Cardiac septum (tissue), 1 donor: ENCODE measurements at regions of chr15 and their contacts with region 1.

Region 1: GRCh38 chr15:49901996-49902684 is 216.9 kb downstream of the ATP8B4 start:
- DNase-seq: no peak

Region 2: DNA sequence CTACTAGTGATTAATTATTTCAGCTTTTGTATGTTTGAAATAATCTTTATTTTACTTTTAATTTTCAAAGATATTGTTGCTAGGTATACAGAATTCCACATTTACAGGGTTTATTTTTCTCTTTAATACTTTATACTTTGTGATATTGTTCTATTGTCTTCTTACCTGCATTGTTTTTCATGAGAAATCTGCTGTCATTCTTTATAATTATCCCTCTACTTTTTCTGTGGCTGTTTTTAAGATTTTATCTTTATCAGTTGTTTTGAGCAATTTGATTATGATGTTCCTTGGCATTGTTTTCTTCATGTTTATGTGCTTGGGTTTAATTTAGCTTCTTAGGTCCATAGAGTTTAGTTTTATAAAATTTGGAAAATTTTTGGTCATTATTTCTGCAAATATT is 112.7 kb before region 1 on chr15:
- intact Hi-C with region 1: no loop called
- DNase-seq: no peak

Region 3: DNA sequence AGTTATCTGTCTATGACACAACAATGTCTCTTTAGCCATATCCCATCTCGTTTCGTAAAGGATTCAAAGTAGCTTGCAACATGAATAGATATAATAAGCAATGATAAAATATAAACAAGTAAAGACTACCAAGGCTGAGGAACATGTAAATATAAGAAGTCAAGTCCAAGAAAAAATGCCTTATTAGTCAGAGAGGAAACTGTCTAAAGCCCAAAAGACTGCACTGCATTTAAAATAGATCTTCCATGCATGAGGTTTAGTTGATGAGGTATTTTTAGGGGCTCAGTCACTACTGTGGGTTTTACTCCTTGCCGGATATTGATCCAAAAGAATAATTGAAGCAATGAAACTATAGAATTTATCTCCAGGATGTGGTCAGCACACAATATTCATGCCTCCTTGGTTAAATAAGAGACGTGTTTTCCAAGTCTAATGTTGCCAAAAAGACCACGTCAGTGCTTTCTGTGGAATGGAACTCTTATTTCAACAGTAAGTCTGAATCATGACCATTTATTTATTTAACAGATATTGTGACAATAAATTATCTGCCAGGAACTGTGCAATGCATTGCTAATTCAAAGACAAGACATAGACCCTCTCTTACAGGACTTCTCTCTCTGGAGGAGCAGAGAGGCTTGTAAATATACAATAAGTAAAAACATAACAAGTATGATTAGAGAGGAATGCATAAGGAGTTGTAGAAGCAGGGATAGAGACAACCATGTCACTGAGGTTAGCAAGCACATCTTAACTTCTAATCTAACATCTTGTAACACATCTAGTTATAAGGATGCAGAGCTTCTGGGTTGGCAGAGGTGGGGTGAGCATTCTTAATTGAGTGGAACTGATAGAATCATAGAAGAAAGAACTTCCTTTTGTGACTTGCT is 54.0 kb before region 1 on chr15:
- intact Hi-C with region 1: no loop called
- DNase-seq: no peak

Region 4: DNA sequence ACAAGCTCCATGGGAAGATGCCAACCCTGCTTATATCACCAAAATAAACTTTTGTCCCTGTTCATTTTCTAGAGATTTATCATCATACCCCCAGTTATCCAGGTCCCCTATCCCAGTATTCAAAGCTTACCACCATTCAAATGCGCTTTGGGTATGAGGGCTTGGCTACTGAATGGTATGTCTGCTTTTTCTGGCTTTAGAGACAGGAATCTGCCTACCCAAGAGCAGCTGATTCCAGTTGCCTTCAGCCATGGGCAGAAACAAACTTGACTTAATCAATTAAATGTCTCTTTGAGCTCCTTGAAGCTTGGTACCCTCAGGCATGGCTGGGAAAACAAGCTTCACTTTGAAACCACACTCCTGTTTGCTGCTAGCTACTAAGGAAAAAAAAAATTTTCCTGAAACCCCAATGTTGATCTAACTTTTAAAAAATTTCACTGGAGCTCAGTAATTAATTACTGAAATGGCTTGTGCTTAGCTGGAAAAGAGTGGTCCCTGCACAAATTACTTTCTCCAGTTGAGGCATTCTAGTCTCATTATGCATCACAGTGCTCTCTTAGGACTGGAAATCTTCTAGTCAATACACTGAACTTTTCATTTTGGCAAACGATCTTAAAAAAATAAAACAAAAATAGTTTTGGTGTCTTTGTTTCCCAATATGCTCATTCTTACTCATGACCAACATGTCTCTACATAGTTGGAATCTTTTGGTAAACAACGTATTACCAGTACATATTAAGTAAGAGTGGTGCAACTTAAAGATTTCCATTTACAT is 38.5 kb before region 1 on chr15:
- intact Hi-C with region 1: loop called (anchors 5 kb)
- DNase-seq: no peak

Region 5: DNA sequence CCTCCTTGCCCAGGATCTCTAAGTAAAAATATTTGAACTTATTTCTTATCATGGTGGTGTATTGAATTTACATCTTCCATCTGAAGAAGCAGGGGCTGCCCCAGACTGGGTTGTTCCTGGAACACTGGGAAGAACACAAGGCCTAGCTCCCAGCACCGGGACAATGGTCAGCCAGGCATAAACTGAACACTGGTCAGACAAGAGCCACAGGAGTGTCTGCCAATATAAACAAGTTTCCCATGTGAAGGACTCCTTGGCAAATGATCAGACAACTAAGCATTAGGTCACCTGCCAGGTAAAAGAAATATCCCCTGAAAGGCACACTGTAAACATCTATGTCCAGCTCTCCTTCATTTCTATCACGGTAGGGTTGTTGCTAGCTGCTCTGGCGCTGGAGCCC is 44.6 kb after region 1 on chr15:
- intact Hi-C with region 1: no loop called
- DNase-seq: no peak

Region 6: DNA sequence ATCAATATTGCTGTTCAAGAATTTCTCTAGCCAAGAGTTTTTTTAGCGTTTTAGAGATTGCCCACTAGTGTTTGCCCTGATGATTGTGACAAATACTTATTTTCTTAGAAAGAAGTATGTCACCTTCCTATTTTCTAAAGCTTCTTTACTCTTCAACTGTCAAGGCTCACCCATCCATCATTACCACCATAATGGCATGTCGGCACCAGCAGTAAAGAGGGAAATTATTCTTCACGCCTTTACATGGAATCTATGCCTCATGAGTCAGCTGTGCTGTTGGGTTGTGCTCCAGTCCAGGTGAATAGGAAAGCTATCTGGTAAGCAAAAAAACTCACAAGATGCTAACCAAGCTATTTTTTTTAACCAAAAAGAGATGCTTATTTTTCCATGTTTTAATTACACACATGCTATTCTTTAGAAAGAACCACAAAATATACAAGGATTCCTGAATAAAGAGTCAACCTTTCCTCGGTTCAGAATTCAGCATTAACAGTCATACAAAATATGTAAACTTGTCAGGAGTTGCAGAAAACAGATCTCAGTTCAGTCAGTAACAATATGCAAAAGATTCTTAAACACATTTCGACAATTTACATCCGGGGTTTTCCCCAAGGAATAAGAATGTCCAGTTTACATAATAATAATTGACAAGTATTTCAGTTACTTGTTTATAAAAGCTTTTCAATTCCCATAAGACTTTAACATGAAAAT is 88.8 kb after region 1 on chr15:
- intact Hi-C with region 1: loop called (anchors 5 kb)
- DNase-seq: no peak

Region 7: GRCh38 chr15:50051803-50052419 is 149.8 kb after region 1 on chr15:
- intact Hi-C with region 1: loop called (anchors 10 kb)
- DNase-seq: no peak